Breast epithelium (tissue), 4 donors: ENCODE measurements at regions of chr2 and their contacts with region 1.

Region 1: DNA sequence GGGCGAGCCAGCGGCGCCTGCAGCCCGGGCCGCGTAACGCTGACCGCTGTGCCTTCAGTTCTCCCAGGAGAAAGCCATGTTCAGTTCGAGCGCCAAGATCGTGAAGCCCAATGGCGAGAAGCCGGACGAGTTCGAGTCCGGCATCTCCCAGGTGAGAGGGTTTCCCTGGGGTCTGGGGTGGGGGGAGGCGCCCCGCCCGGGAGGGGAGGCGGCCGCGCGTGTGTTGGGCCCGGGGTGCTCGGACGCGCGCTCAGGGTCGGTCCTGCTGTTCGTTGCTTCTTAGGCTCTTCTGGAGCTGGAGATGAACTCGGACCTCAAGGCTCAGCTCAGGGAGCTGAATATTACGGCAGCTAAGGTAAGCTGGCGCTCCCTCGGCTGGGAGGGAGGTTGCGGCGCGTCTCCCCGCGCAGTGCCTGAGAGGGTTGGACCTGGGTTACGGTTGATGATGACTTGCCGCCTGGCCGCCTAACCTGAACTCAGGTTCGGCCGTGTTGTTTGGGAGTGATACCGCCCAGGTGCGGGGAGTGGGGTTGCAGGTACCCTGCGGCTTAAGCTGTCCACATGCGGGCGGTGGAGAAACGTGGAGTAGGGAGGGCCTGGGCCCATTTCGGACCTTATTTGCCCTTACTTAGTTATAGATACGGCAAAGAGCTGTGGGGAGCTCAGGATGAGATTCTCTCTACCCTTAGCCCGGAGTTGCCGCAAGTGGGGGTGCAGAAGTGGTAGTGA is 638 bp downstream of the RPS7 start:
- DNase-seq: no peak
- H3K4me3 ChIP-seq: peak overlapping the region; percentile 79 to 99 (median 83)
- H3K27ac ChIP-seq: peak overlapping the region; percentile 94 to 99
- H3K4me1 ChIP-seq: peaks cover 0 to 22% of the 10 kb centered on the region in 2 donors
- H3K27me3 ChIP-seq: no peaks in the 10 kb centered on the region
- CTCF ChIP-seq: no peak
- POLR2A ChIP-seq: no peak

Region 2: DNA sequence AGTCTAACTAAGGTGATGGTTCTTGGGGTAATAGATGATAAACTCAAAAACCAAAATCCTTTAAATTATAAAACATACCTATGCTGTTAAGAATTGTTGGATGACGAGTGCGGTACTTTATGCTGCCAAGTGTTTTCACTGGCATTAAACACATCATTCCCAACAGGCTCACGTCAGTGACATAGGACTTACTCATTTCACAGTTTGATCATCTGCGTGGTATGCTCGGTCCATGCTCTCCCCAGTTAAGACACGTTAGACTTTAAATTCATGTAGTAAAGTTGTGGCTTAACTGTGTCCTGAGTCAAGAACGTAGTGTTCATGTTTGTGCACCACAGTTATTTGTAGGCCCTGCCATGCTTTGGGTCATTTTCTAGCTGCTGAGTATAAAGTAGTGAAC is 1119.0 kb before region 1 on chr2:
- intact Hi-C with region 1: no loop called
- DNase-seq: no peak
- H3K4me3 ChIP-seq: no peak overlapping the region
- H3K27ac ChIP-seq: no peak overlapping the region
- H3K4me1 ChIP-seq: no peaks in the 10 kb centered on the region
- H3K27me3 ChIP-seq: no peaks in the 10 kb centered on the region
- CTCF ChIP-seq: no peak
- POLR2A ChIP-seq: no peak

Region 3: DNA sequence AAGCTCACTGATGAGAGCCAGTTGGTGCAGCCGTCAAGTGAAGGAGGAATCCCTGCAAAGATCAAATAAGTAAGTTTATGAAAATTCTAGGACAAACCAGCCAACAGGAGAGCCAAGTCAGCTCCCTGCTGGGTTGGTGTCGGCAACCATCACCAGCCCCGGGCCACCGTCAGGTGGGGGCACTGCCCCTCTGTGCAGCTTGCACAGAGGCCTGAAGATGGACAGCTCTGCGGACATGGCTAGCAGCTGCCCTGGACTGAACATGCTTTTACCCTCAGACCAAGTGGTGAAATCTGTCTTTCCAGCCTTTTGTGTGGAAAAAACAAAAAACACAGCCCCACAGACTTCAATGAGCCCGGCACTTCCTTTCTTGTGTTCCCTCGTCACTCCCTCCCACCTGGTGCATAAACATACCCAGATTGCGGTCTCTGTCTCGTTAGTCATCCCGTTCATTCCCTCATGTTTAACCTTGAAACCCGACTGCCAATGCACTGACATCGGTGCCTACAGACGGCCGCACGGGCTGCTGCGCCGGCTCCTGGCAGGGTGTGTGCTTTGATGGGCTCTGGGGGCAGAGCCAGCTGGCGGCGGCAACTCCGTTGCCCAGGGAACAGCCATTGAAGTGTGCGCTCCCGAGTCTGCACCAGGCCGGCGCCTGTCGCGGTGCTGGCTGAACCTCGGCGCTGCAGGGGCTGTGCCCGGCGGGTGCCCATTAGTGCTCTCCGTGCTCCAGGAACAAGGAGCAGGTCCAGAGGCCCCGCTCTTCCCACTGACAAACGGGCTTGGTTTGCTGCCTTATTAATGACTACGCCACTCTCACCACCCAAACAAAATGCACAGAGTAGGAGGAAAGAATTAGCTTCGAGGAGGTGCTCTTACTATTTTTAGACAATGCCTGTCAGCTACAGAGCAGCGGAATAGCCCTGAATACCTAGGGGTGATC is 293.4 kb before region 1 on chr2:
- intact Hi-C with region 1: no loop called
- DNase-seq: no peak
- H3K4me3 ChIP-seq: peak overlapping the region in 1 of 3 donors; percentile 24
- H3K27ac ChIP-seq: no peak overlapping the region
- H3K4me1 ChIP-seq: no peaks in the 10 kb centered on the region
- H3K27me3 ChIP-seq: no peaks in the 10 kb centered on the region
- CTCF ChIP-seq: no peak
- POLR2A ChIP-seq: no peak

Region 4: DNA sequence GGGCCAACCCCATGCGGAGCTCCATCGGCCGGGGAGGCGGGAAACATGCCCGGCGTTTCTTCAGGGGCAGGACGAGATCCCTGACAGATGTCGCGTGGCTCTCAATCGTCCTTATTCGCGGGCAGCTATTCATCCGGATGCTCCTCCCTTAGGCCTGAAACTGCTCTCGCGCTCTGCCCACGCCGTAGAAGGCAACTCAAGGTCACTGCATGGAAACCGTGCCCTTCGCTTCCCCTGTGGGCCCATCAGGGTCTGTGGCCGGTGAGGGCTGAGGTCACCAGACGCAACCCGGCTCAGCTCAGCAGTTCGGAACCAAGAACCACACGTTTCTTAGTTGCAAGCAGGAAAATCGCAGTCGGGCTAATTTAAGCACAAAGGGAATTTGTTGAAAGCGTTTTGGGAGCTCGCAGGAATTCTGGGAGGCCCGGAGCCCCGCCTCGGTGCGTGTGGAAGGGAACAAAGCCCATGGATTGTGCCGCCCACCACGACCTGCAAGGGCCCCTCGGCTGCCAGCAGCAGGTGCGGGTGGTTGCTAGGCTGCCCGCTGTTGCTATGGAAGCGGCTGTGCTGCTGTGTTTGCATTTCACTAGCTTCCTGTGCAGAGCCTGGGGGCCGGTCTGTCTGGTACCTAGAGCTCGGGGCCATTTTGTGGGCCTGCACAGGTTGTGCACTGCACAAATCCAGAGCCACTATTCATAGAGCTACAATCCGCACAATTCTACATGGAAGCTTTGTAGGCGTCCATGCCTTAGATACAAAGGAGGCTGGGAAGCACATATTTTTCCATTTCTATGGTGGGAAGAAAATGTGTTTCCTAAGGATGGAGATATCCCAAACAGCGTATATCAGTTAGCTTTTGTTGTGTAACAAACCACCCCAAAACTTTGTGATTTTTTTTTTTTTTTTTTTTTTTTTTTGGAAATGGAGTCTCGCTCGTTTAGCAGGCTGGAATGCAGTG is 76.3 kb after region 1 on chr2:
- intact Hi-C with region 1: no loop called
- DNase-seq: peak in 1 of 2 donors; percentile 26
- H3K4me3 ChIP-seq: peak overlapping the region in 2 of 3 donors; percentile 41 to 62
- H3K27ac ChIP-seq: peak overlapping the region; percentile 50 to 87
- H3K4me1 ChIP-seq: no peaks in the 10 kb centered on the region
- H3K27me3 ChIP-seq: no peaks in the 10 kb centered on the region
- CTCF ChIP-seq: no peak
- POLR2A ChIP-seq: no peak

Region 5: GRCh38 chr2:3954261-3954660 is 378.6 kb after region 1 on chr2:
- intact Hi-C with region 1: loop called (anchors 5 kb)
- DNase-seq: no peak
- H3K4me3 ChIP-seq: no peak overlapping the region
- H3K27ac ChIP-seq: no peak overlapping the region
- H3K4me1 ChIP-seq: no peaks in the 10 kb centered on the region
- H3K27me3 ChIP-seq: no peaks in the 10 kb centered on the region
- CTCF ChIP-seq: no peak
- POLR2A ChIP-seq: no peak